Natural killer cell (primary cell): ENCODE measurements at regions of chr6 and their contacts with region 1.

Region 1: DNA sequence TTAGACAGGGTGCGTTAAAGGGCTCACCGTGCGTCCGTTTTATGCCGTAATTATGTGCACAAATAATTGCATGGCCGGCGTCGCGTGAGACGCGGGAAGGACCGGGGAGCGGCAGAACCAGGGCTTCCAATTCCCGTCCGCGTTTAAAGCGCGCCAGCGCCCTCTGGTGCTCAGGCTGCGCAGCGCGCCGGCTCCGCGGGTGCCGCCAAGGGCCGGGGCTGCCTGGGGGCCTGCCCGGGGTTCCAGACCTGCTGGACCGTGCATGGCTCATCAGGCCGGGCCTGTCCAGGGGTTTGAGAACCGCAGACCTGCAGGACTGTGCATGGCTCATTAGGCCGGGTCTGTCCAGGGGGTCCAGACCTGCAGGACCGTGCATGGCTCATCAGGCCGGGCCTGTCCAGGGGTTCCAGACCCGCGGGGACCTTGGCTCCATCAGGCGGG is 369.0 kb downstream of the THBS2 start:
- DNase-seq: peak; percentile 80 to 81
- ATAC-seq: peak; percentile 76 to 94 (median 82)
- H3K4me3 ChIP-seq: peak overlapping the region; percentile 44
- H3K4me3 Mint-ChIP-seq: peak overlapping the region; percentile 85
- H3K27ac ChIP-seq: peak overlapping the region; percentile 87
- H3K27ac Mint-ChIP-seq: peak overlapping the region; percentile 85 to 96
- H3K4me1 ChIP-seq: peaks cover 25% of the 10 kb centered on the region
- H3K4me1 Mint-ChIP-seq: peaks cover 30 to 35% of the 10 kb centered on the region in 2 donors
- H3K27me3 ChIP-seq: no peaks in the 10 kb centered on the region
- H3K27me3 Mint-ChIP-seq: no peaks in the 10 kb centered on the region
- CTCF ChIP-seq: peak; percentile 96

Region 2: GRCh38 chr6:168370310-168370991 is 514.2 kb before region 1 on chr6:
- intact Hi-C with region 1: loop called (anchors 1 kb)
- DNase-seq: peak; percentile 58 to 61
- ATAC-seq: peak in 2 of 3 donors; percentile 66 to 88
- H3K4me3 ChIP-seq: no peak overlapping the region
- H3K4me3 Mint-ChIP-seq: no peak overlapping the region
- H3K27ac ChIP-seq: no peak overlapping the region
- H3K27ac Mint-ChIP-seq: no peak overlapping the region
- H3K4me1 ChIP-seq: peaks cover 5% of the 10 kb centered on the region
- H3K4me1 Mint-ChIP-seq: peaks cover 14 to 23% of the 10 kb centered on the region in 2 donors
- H3K27me3 ChIP-seq: no peaks in the 10 kb centered on the region
- H3K27me3 Mint-ChIP-seq: peaks cover 6 to 7% of the 10 kb centered on the region in 2 donors
- CTCF ChIP-seq: peak; percentile 78

Region 3: GRCh38 chr6:168636147-168637004 is 248.3 kb before region 1 on chr6:
- intact Hi-C with region 1: loop called (anchors 10 kb)
- DNase-seq: no peak
- ATAC-seq: no peak
- H3K4me3 ChIP-seq: no peak overlapping the region
- H3K4me3 Mint-ChIP-seq: no peak overlapping the region
- H3K27ac ChIP-seq: no peak overlapping the region
- H3K27ac Mint-ChIP-seq: no peak overlapping the region
- H3K4me1 ChIP-seq: no peaks in the 10 kb centered on the region
- H3K4me1 Mint-ChIP-seq: peaks cover 8 to 26% of the 10 kb centered on the region in 2 donors
- H3K27me3 ChIP-seq: no peaks in the 10 kb centered on the region
- H3K27me3 Mint-ChIP-seq: peaks cover 14 to 54% of the 10 kb centered on the region in 2 donors
- CTCF ChIP-seq: no peak

Region 4: DNA sequence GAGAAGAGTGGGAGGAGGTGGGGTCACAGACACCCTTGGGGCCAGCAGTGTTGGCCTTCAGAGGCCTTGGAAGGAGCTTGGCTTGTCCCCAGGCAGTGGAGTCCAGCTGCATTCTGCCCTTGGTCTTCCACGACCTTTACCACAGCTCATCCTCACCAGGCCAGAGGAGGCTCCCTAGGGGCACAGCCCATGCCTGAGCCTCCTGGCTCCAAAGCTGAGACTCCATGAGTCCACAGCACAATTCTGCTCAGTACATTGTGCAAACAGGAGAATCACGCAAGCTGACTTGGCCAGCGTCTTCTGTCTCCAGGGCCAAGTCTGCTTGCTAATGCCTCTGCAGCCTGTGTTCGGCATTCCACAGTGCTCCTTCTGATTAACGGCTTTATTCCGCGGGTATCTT is 106.5 kb before region 1 on chr6:
- intact Hi-C with region 1: no loop called
- DNase-seq: no peak
- ATAC-seq: no peak
- H3K4me3 ChIP-seq: no peak overlapping the region
- H3K4me3 Mint-ChIP-seq: no peak overlapping the region
- H3K27ac ChIP-seq: no peak overlapping the region
- H3K27ac Mint-ChIP-seq: no peak overlapping the region
- H3K4me1 ChIP-seq: no peaks in the 10 kb centered on the region
- H3K4me1 Mint-ChIP-seq: no peaks in the 10 kb centered on the region
- H3K27me3 ChIP-seq: no peaks in the 10 kb centered on the region
- H3K27me3 Mint-ChIP-seq: peaks cover 3 to 14% of the 10 kb centered on the region in 2 donors
- CTCF ChIP-seq: no peak

Region 5: DNA sequence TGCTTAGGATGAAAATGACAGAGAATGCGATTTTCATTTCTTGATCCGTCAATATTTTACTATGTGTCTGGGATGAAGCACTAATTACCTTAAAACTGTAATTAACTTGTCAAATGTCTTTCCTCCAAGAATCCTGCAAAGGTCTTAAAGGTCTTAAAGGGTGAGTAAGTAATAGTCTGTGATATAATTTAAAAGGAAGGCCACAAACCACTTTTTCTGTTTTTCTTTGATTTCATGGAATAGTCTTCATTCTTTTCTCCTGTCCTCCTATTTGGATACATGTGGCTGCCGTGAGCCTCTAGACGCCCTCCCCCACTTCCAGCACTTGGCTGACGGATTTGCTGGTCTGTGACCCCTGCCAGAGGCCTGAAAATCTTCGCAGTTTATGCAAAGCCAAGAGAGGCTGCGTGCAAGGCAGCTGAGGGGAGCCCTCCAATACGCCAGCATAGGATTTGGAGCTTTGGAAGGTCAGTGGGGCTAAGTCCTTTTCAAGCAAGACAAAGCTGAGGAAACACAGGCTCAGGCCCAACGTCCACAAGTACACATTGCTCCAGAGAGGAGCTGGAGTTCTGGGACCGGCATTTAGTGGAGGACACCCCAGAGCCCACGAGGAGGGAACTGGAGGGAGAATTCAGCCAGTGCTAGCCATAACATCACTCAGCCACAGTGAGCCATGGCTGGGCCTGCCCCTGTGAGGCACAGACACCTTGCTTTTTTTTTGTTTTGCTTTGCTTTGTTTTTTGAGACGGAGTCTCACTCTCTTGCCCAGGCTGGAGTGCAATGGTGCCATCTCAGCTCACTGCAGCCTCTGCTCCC is 61.1 kb before region 1 on chr6:
- intact Hi-C with region 1: loop called (anchors 10 kb)
- DNase-seq: no peak
- ATAC-seq: no peak
- H3K4me3 ChIP-seq: no peak overlapping the region
- H3K4me3 Mint-ChIP-seq: no peak overlapping the region
- H3K27ac ChIP-seq: no peak overlapping the region
- H3K27ac Mint-ChIP-seq: no peak overlapping the region
- H3K4me1 ChIP-seq: no peaks in the 10 kb centered on the region
- H3K4me1 Mint-ChIP-seq: no peaks in the 10 kb centered on the region
- H3K27me3 ChIP-seq: no peaks in the 10 kb centered on the region
- H3K27me3 Mint-ChIP-seq: peaks cover 0 to 5% of the 10 kb centered on the region in 2 donors
- CTCF ChIP-seq: no peak